Posterior vena cava (tissue), 2 donors: ENCODE measurements at regions of chr1 and their contacts with region 1.

Region 1: GRCh38 chr1:58652651-58653184 is 47.1 kb downstream of the MYSM1 start:
- DNase-seq: no peak

Region 2: GRCh38 chr1:58515794-58516401 is 136.8 kb before region 1 on chr1:
- intact Hi-C with region 1: loop called in 1 of 2 experiments (anchors 5 kb)
- DNase-seq: no peak

Region 3: DNA sequence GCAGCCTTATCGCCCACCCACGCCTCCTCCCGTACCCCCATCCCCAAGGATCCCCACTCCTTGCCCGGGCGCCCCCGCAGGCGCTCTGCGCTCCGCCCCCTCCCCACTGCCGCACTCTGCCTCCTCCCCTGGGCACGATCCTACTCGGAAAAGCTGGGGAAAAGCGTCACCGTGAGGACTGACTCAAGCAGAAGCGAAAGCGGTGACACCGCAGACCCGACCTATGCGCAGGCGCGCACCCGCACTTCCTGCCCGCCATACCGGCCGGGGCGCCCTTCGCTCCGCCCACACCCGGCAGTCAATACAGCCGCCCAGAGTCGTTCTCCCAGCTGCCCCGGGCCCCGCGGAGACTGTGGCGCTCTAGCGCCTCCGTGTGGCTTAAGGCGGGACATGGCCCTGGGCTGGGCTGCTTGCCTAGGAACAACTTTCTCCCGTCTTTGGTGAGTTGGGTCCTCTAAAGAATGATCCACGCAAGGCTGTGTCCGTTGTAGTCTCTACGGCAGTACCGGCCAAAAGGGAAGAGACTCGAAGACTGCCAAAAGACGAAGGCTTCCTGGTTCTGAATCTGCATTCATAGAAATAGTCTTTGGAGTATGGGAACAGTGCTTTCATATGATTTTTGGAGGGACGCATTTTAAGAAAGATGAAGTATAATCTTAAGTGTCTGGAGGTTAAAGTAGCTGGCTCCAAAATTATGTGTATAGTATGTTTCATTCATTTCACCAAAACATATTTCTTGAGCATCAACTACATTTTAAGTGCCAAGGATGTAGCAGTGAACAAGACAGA is 106.0 kb before region 1 on chr1 and contains the start of gene OMA1:
- intact Hi-C with region 1: loop called (anchors 10 kb)
- DNase-seq: peak; percentile 100
- total RNA-seq, gene OMA1: 14.1 to 27.2 TPM